H1 (cell line): ENCODE measurements at regions of chr7 and their contacts with region 1.

Region 1: DNA sequence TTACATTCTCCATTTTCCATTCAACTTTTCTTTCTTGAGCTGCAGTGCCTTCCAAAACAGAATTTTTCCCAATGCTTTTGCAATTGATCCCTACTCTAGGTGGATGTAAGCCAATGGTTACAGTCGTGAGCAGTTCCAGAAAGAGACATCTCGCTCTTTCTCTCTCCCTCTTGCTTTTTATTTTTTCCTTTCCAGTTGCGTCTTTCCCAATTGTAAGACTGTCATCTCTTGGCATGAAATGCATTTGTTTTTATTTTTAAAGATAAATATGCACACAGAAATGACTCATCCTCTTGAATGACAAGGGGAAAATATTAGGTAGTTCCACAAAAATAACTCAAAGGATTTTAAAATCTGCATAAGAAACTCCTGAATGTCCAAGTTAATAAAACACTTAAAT is 25.1 kb downstream of the GLI3 start:
- DNase-seq: no peak
- H3K4me3 ChIP-seq: no peak overlapping the region
- H3K27ac ChIP-seq: no peak overlapping the region
- H3K4me1 ChIP-seq: peaks cover 0 to 14% (median 11%) of the 10 kb centered on the region in 4 experiments; a peak in 5 of 7 replicates
- H3K27me3 ChIP-seq: no peaks in the 10 kb centered on the region
- CTCF ChIP-seq: no peak
- EP300 ChIP-seq: no peak
- POLR2A ChIP-seq: no peak
- RAD21 ChIP-seq: no peak

Region 2: DNA sequence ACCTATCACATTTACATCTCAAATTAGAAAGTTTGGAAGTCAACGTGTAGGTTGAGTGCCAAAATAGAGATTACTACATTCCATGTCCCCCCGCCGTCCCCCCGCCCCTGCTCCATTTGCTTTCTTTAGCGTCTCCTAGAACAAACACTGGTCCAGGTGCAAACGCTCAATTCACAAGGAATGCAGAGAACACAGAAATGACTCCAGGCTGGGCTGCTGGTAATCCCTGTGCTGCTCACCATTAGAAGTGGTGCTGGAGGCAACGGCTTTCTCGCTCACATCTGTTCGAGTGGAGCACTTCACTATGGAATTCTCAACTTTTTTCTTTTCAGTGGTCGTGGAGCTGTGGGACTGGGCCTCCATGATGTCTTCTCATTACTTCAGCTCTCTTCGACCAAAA is 11.0 kb after region 1 on chr7:
- CTCF ChIA-PET with region 1: interaction called, 6 read pairs
- POLR2A ChIA-PET with region 1: interaction called, 14 read pairs
- DNase-seq: no peak
- H3K4me3 ChIP-seq: peak overlapping the region in 1 of 4 experiments; percentile 32; a peak in 1 of 8 replicates
- H3K27ac ChIP-seq: peak overlapping the region; percentile 57; the same call in 1 of the 2 replicates
- H3K4me1 ChIP-seq: peaks cover 16 to 35% (median 32%) of the 10 kb centered on the region in 4 experiments
- H3K27me3 ChIP-seq: no peaks in the 10 kb centered on the region
- CTCF ChIP-seq: no peak
- EP300 ChIP-seq: peak in 1 of 2 experiments; percentile 55; a peak in 1 of 3 replicates
- POLR2A ChIP-seq: no peak
- RAD21 ChIP-seq: peak in 1 of 2 experiments; percentile 6; a peak in 1 of 4 replicates